ENCODE measurements at regions of chr6 and their contacts with region 1.

Region 1: GRCh38 chr6:156776840-156777576 is at the start of gene ARID1B:
- DNase-seq: peak; percentile 87 to 93 (median 89)
- ATAC-seq: peak; percentile 62 to 85 (median 81)
- H3K4me3 ChIP-seq: peak within 1 kb of the TSS; percentile 67 to 97 (median 80)
- H3K27ac ChIP-seq: peak within 1 kb of the TSS; percentile 96 to 99 (median 98)
- H3K4me1 ChIP-seq: peaks cover 0 to 47% (median 30%) of the 10 kb centered on the region in 12 donors
- H3K27me3 ChIP-seq: no peaks in the 10 kb centered on the region
- CTCF ChIP-seq: no peak
- POLR2A ChIP-seq: peak in 1 of 2 donors; percentile 56
- total RNA-seq, gene ARID1B: 34.3 to 76.1 (median 53.9) TPM

Region 2: DNA sequence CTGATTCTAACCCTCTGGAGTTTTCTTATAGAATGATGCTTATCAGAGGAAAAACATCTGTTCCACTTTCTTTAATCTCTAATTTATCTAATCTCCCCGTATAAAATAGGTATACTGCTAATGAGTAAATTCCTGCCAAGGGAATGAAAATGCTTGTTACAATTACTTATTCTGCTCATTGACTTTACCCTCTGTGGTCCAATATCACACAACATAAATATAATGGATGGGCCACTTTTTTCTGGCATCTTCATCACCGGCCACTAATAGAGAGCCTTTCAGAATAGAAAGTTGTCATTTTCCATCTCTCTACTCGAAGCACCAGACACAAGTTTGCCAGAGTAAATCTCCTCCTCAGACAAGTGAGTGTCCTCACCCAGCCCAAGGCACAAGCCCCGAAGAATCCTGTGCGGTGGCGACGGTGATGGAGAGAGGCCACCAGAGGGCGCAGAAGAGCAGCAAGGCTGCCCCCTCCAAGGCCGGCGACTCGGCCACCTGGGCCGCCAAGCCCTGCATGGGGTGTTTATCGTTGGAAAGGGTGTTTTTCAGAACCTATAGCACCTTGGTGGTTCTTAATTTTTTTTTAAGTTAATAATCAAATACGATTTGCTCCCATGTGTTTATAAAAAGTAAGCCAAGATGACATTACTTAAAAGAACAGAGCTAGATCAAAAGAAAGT is 212.7 kb before region 1 on chr6:
- intact Hi-C with region 1: loop called (anchors 1 to 10 kb)
- DNase-seq: peak; percentile 71 to 89 (median 79)
- ATAC-seq: peak; percentile 91 to 96 (median 94)
- H3K4me3 ChIP-seq: no peak overlapping the region
- H3K27ac ChIP-seq: no peak overlapping the region
- H3K4me1 ChIP-seq: peaks cover 0 to 12% (median 3%) of the 10 kb centered on the region in 12 donors
- H3K27me3 ChIP-seq: peaks cover 0 to 3% (median 0%) of the 10 kb centered on the region in 9 donors
- CTCF ChIP-seq: peak; percentile 92 to 99 (median 96)
- POLR2A ChIP-seq: no peak

Region 3: GRCh38 chr6:156731396-156731795 is 45.6 kb before region 1 on chr6:
- intact Hi-C with region 1: loop called in 1 of 10 experiments (anchors 5 kb)
- DNase-seq: no peak
- ATAC-seq: no peak
- H3K4me3 ChIP-seq: no peak overlapping the region
- H3K27ac ChIP-seq: no peak overlapping the region
- H3K4me1 ChIP-seq: no peaks in the 10 kb centered on the region
- H3K27me3 ChIP-seq: no peaks in the 10 kb centered on the region
- CTCF ChIP-seq: no peak
- POLR2A ChIP-seq: no peak

Region 4: GRCh38 chr6:156814036-156814581 is 37.1 kb after region 1 on chr6:
- intact Hi-C with region 1: no loop called
- DNase-seq: no peak
- ATAC-seq: no peak
- H3K4me3 ChIP-seq: no peak overlapping the region
- H3K27ac ChIP-seq: no peak overlapping the region
- H3K4me1 ChIP-seq: peaks cover 3 to 85% (median 45%) of the 10 kb centered on the region in 12 donors
- H3K27me3 ChIP-seq: no peaks in the 10 kb centered on the region
- CTCF ChIP-seq: no peak
- POLR2A ChIP-seq: no peak

Region 5: GRCh38 chr6:156866220-156867015 is 89.4 kb after region 1 on chr6:
- intact Hi-C with region 1: loop called in 1 of 10 experiments (anchors 5 kb)
- DNase-seq: peak in 3 of 5 donors; percentile 32 to 58 (median 33)
- ATAC-seq: peak; percentile 69 to 88 (median 81)
- H3K4me3 ChIP-seq: no peak overlapping the region
- H3K27ac ChIP-seq: no peak overlapping the region
- H3K4me1 ChIP-seq: peaks cover 4 to 72% (median 51%) of the 10 kb centered on the region in 12 donors
- H3K27me3 ChIP-seq: no peaks in the 10 kb centered on the region
- CTCF ChIP-seq: peak in 4 of 12 donors; percentile 6 to 34 (median 26)
- POLR2A ChIP-seq: no peak

Region 6: DNA sequence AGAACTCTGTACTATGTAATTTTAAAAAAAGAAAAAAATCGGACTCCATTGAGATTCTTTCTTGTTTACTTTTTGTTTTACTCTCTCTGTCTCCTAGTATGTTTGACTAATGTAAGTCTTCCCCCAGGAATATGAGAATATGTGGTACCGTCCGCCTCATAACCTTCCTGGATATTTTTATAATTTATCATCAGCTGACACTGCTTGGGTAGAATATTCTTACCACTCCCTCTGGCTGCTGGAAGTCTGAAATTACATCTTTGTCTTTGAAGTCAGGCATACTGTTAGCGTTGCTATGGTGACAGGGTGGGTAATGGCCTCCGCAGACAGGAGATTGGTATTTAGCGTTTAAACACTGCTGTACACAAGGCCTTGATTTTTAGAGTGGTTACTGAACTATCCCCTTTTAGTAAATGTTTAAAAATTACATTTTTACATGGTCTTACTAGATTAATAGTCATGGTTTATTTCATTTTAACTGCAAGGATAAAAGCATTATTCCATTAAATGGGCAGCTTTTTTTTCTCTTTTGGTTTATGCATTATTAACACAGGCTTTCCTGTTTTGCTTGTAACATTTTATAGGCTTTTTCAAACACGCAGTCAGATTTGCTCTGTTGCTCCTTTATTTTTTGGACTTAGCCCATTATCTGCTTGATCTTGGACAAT is 176.6 kb after region 1 on chr6:
- intact Hi-C with region 1: loop called in 8 of 10 experiments (anchors 5 to 10 kb)
- DNase-seq: peak in 2 of 5 donors; percentile 47 to 62
- ATAC-seq: peak; percentile 57 to 80 (median 71)
- H3K4me3 ChIP-seq: peak overlapping the region in 7 of 12 donors; percentile 6 to 39 (median 29)
- H3K27ac ChIP-seq: peak overlapping the region in 11 of 12 donors; percentile 27 to 76 (median 53)
- H3K4me1 ChIP-seq: peaks cover 13 to 88% (median 66%) of the 10 kb centered on the region in 12 donors
- H3K27me3 ChIP-seq: no peaks in the 10 kb centered on the region
- CTCF ChIP-seq: peak in 10 of 12 donors; percentile 24 to 66 (median 50)
- POLR2A ChIP-seq: no peak

Region 7: DNA sequence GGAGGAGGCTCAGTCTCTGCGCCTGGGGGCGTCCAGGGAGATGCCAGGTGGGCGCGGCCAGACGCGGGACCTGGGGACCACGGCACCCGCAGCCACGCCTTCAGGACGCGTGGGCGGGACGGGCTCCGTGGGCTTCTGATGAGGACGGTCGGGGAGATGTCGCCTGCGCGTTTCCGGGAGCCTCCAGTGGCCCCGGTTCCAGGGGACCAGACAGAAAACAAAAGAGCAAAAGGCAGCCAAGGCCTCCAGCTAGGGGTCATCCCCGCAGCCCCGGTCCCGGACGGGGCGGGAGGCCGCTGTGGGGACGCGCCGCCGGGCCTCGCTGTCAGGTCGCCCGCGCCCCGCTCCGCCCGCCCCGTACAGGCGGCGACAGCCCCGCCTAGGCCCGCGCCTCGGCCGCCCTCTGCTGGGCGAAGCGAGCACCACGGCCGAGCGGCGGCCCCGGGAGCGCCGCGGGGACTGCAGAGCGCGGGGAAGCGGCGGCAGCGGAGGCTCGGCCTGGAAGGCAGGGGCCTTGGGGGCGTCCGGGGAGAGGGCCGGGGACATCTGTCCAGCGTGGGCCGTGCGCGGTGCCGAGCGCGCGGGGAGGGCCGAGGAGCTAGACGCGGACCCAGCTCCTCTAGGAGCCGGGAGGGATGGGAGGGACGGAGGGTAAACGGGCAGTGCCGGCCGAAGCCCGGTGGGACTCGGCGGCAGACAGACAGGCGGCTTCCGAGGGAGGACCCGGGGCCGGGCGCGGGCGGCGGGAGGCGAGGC is 497.6 kb after region 1 on chr6:
- intact Hi-C with region 1: loop called in 2 of 10 experiments (anchors 10 kb)
- DNase-seq: peak; percentile 77 to 91 (median 82)
- ATAC-seq: peak; percentile 74 to 98 (median 94)
- H3K4me3 ChIP-seq: peak overlapping the region; percentile 28 to 80 (median 64)
- H3K27ac ChIP-seq: peak overlapping the region; percentile 51 to 90 (median 81)
- H3K4me1 ChIP-seq: peaks cover 0 to 28% (median 15%) of the 10 kb centered on the region in 12 donors
- H3K27me3 ChIP-seq: no peaks in the 10 kb centered on the region
- CTCF ChIP-seq: peak; percentile 27 to 98 (median 88)
- POLR2A ChIP-seq: peak in 1 of 2 donors; percentile 40

Region 8: GRCh38 chr6:157614026-157614568 is 837.1 kb after region 1 on chr6:
- intact Hi-C with region 1: no loop called
- DNase-seq: no peak
- ATAC-seq: no peak
- H3K4me3 ChIP-seq: no peak overlapping the region
- H3K27ac ChIP-seq: no peak overlapping the region
- H3K4me1 ChIP-seq: peaks cover 0 to 14% (median 0%) of the 10 kb centered on the region in 12 donors
- H3K27me3 ChIP-seq: no peaks in the 10 kb centered on the region
- CTCF ChIP-seq: no peak
- POLR2A ChIP-seq: no peak